ENCODE measurements at regions of chr20 and their contacts with region 1.

Region 1: DNA sequence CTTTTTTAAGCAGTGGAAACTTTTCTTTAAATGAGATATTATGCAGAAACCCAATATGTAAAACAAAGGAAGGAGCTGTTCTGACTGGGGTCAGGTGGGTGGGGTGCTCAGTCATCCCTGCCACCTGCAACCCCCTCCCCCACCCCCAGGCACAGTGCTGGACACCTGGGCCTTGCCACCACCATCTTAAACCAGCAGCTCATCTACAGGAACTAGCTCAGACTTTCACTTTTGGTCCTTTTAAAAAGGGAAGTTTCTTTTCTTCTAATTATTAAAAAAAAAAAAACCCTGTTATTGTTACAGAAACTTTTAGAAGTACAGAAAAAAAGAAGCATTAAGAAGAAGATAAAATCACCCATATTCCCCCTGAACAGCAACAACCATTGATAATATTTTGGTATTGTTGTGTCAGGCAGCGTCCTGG is 37.1 kb downstream of the PPP1R16B start:
- DNase-seq: no peak
- H3K4me3 ChIP-seq: no peak overlapping the region
- H3K27ac ChIP-seq: peak overlapping the region in 35 of 59 donors; percentile 3 to 89 (median 39)
- H3K27me3 ChIP-seq: no peaks in the 10 kb centered on the region
- CTCF ChIP-seq: no peak

Region 2: GRCh38 chr20:38883081-38883980 is 40.8 kb after region 1 on chr20:
- intact Hi-C with region 1: loop called in 1 of 2 experiments (anchors 5 kb)
- DNase-seq: peak; percentile 69 to 97 (median 83)
- H3K4me3 ChIP-seq: no peak overlapping the region
- H3K27ac ChIP-seq: peak overlapping the region; percentile 72 to 100 (median 98)
- H3K27me3 ChIP-seq: no peaks in the 10 kb centered on the region
- CTCF ChIP-seq: peak in 6 of 56 donors; percentile 12 to 45 (median 21)

Region 3: GRCh38 chr20:39342463-39342862 is 499.9 kb after region 1 on chr20:
- intact Hi-C with region 1: no loop called
- DNase-seq: no peak
- H3K4me3 ChIP-seq: no peak overlapping the region
- H3K27ac ChIP-seq: no peak overlapping the region
- H3K27me3 ChIP-seq: peaks cover 0 to 2% (median 0%) of the 10 kb centered on the region in 45 donors
- CTCF ChIP-seq: no peak

Measured in dorsolateral prefrontal cortex (tissue), 120 donors.